Endothelial cell of umbilical vein (primary cell): ENCODE measurements at regions of chr6 and their contacts with region 1.

Region 1: GRCh38 chr6:2931970-2932748 is 29.1 kb upstream of the SERPINB9 start:
- DNase-seq: peak; percentile 84
- H3K4me3 ChIP-seq: no peak overlapping the region
- H3K27ac ChIP-seq: no peak overlapping the region
- H3K4me1 ChIP-seq: peaks cover 2% of the 10 kb centered on the region
- H3K27me3 ChIP-seq: no peaks in the 10 kb centered on the region
- CTCF ChIP-seq: peak; percentile 93 to 96
- POLR2A ChIP-seq: no peak

Region 2: GRCh38 chr6:2783188-2783963 is 148.8 kb before region 1 on chr6:
- CTCF ChIA-PET with region 1: interaction called, 17 read pairs
- POLR2A ChIA-PET with region 1: no interaction called
- dilution Hi-C with region 1: no loop called
- intact Hi-C with region 1: no loop called
- DNase-seq: peak; percentile 94
- H3K4me3 ChIP-seq: peak overlapping the region in 1 of 3 experiments; percentile 8
- H3K27ac ChIP-seq: peak overlapping the region; percentile 73
- H3K4me1 ChIP-seq: peaks cover 23% of the 10 kb centered on the region
- H3K27me3 ChIP-seq: no peaks in the 10 kb centered on the region
- CTCF ChIP-seq: peak in 1 of 2 donors; percentile 35
- POLR2A ChIP-seq: no peak

Region 3: GRCh38 chr6:2853761-2854395 is 78.3 kb before region 1 on chr6:
- CTCF ChIA-PET with region 1: interaction called, 8 read pairs
- POLR2A ChIA-PET with region 1: no interaction called
- dilution Hi-C with region 1: no loop called
- intact Hi-C with region 1: loop called (anchors 2 kb)
- DNase-seq: peak; percentile 85
- H3K4me3 ChIP-seq: peak overlapping the region in 1 of 3 experiments; percentile 57
- H3K27ac ChIP-seq: peak overlapping the region; percentile 96
- H3K4me1 ChIP-seq: peaks cover 68% of the 10 kb centered on the region
- H3K27me3 ChIP-seq: no peaks in the 10 kb centered on the region
- CTCF ChIP-seq: peak; percentile 11 to 30
- POLR2A ChIP-seq: no peak

Region 4: GRCh38 chr6:2900821-2901644 is 31.1 kb before region 1 on chr6:
- CTCF ChIA-PET with region 1: interaction called, 10 read pairs
- POLR2A ChIA-PET with region 1: interaction called, 4 read pairs
- dilution Hi-C with region 1: no loop called
- intact Hi-C with region 1: no loop called
- DNase-seq: peak; percentile 41
- H3K4me3 ChIP-seq: peak overlapping the region; percentile 22 to 91 (median 66)
- H3K27ac ChIP-seq: no peak overlapping the region
- H3K4me1 ChIP-seq: peaks cover 15% of the 10 kb centered on the region
- H3K27me3 ChIP-seq: no peaks in the 10 kb centered on the region
- CTCF ChIP-seq: no peak
- POLR2A ChIP-seq: no peak